A673 (cell line): ENCODE measurements at regions of chr3 and their contacts with region 1.

Region 1: DNA sequence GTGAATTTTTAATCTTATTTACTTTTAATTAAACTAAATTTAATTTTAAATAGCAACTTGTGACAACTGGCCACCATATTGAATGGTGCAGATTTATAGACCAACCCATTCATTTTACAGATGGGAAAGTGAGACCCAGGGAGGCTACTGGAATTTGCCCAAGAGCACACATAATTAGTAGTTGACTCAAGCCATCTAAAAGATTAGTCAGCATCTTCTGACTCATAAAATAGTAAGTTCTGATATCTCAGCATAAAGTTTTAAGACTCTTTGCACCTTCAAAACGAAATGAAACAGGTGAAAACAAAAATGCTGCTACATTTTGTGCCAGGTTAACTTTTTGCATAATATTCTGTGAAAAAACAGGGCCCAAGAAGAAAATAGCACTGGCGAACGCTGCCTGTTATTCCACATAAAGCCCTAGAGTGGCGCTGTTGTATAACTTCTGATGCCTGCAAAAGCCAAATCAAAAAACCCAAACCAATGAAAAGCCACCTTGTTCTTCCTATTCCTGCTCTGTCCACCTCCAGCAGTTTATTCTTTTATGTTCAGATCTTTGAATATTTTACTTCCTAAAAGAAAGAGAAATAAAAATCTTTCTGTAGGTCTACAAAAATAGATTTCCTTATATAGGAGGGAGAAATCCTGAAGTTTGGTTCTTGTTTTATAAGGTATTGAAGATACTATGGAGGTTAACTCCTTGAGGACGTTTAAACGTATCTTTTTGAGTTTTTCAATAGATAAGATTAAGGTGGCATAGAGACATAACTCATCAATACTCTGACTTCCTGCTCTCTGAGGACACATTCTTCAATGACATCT is 62.8 kb downstream of the OTOL1 start:
- DNase-seq: peak; percentile 75
- H3K4me3 ChIP-seq: peak overlapping the region; percentile 26
- H3K27ac ChIP-seq: no peak overlapping the region
- H3K4me1 ChIP-seq: peaks cover 17% of the 10 kb centered on the region
- H3K27me3 ChIP-seq: no peaks in the 10 kb centered on the region
- CTCF ChIP-seq: peak; percentile 91

Region 2: DNA sequence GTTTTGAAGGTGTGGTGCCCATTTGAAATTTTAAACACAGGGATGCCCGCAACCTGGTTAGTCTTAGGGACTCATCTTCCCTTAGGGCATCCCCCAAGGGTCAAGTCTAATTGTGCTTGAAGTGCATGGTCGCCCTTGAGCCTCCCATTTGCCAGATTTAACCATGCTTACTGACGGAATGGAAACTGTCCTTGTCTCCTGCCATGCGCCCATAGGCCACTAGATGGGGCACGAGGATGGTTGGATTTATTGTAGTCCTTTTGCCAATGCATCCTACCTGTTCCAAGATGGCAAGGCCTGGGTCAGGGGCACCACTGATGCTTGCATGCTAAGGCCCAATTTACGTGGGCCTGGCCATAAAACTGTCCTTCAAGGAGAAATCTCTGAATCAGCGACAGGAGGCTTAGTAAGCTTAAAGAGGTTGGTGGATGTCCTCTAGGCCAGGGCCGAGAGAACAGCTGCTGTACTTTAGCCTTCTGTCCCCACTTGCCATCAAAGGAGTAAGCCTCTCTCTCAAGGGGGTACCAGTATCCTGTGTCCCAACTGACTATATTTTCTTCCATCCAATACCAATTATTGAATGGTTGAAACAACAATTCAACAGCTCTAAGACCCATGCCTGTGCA is 292.7 kb after region 1 on chr3:
- CTCF ChIA-PET with region 1: no interaction called
- POLR2A ChIA-PET with region 1: no interaction called
- intact Hi-C with region 1: loop called (anchors 2 kb)
- DNase-seq: peak; percentile 70
- H3K4me3 ChIP-seq: no peak overlapping the region
- H3K27ac ChIP-seq: no peak overlapping the region
- H3K4me1 ChIP-seq: peaks cover 8% of the 10 kb centered on the region
- H3K27me3 ChIP-seq: no peaks in the 10 kb centered on the region
- CTCF ChIP-seq: peak; percentile 84

Region 3: GRCh38 chr3:162489853-162490252 is 930.5 kb after region 1 on chr3:
- CTCF ChIA-PET with region 1: no interaction called
- POLR2A ChIA-PET with region 1: no interaction called
- intact Hi-C with region 1: loop called (anchors 10 kb)
- DNase-seq: peak; percentile 69
- H3K4me3 ChIP-seq: no peak overlapping the region
- H3K27ac ChIP-seq: no peak overlapping the region
- H3K4me1 ChIP-seq: peaks cover 14% of the 10 kb centered on the region
- H3K27me3 ChIP-seq: no peaks in the 10 kb centered on the region
- CTCF ChIP-seq: peak; percentile 57

Region 4: GRCh38 chr3:163185721-163186350 is 1626.4 kb after region 1 on chr3:
- CTCF ChIA-PET with region 1: no interaction called
- POLR2A ChIA-PET with region 1: no interaction called
- intact Hi-C with region 1: loop called (anchors 10 kb)
- DNase-seq: peak; percentile 92
- H3K4me3 ChIP-seq: no peak overlapping the region
- H3K27ac ChIP-seq: peak overlapping the region; percentile 99
- H3K4me1 ChIP-seq: peaks cover 22% of the 10 kb centered on the region
- H3K27me3 ChIP-seq: no peaks in the 10 kb centered on the region
- CTCF ChIP-seq: no peak